ENCODE measurements at regions of chr10 and their contacts with region 1.

Region 1: GRCh38 chr10:79487296-79488194 is 24.8 kb upstream of the EIF5AL1 start:
- DNase-seq: peak; percentile 50
- H3K4me3 ChIP-seq: no peak overlapping the region
- H3K27ac ChIP-seq: no peak overlapping the region
- H3K4me1 ChIP-seq: no peaks in the 10 kb centered on the region
- H3K27me3 ChIP-seq: peaks cover 3 to 6% of the 10 kb centered on the region in 2 experiments
- CTCF ChIP-seq: peak; percentile 60 to 86
- POLR2A ChIP-seq: no peak

Region 2: DNA sequence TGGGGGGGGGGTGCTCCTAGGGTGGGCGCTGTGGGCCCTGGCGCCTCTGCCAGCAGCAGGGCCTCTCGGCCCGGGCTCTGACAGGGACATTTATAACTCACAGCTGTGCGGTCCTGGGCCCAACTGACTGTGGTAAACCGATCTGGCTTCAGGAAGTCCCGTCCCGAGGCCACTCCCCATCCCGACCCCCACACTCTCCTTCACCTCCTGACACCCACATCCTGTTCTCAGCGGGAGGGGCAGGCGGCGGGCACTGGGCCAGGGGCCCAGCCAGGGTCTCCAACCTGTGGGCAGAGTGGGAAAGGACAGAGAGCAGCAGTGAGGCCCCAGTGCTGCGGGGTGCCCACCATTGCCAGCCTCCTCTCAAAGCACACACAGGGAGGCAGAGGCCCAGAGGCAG is 349.7 kb before region 1 on chr10:
- CTCF ChIA-PET with region 1: no interaction called
- POLR2A ChIA-PET with region 1: no interaction called
- dilution Hi-C with region 1: no loop called
- intact Hi-C with region 1: no loop called
- DNase-seq: no peak
- H3K4me3 ChIP-seq: no peak overlapping the region
- H3K27ac ChIP-seq: no peak overlapping the region
- H3K4me1 ChIP-seq: peaks cover 30% of the 10 kb centered on the region
- H3K27me3 ChIP-seq: no peaks in the 10 kb centered on the region
- CTCF ChIP-seq: no peak
- POLR2A ChIP-seq: no peak

Region 3: GRCh38 chr10:79331709-79332108 is 155.8 kb before region 1 on chr10:
- CTCF ChIA-PET with region 1: no interaction called
- POLR2A ChIA-PET with region 1: no interaction called
- dilution Hi-C with region 1: no loop called
- intact Hi-C with region 1: no loop called
- DNase-seq: no peak
- H3K4me3 ChIP-seq: no peak overlapping the region
- H3K27ac ChIP-seq: no peak overlapping the region
- H3K4me1 ChIP-seq: no peaks in the 10 kb centered on the region
- H3K27me3 ChIP-seq: peaks cover 0 to 2% of the 10 kb centered on the region in 2 experiments
- CTCF ChIP-seq: no peak
- POLR2A ChIP-seq: no peak

Region 4: GRCh38 chr10:79463578-79464496 is 23.7 kb before region 1 on chr10:
- CTCF ChIA-PET with region 1: interaction called, 20 read pairs
- POLR2A ChIA-PET with region 1: no interaction called
- dilution Hi-C with region 1: no loop called
- intact Hi-C with region 1: no loop called
- DNase-seq: no peak
- H3K4me3 ChIP-seq: no peak overlapping the region
- H3K27ac ChIP-seq: no peak overlapping the region
- H3K4me1 ChIP-seq: no peaks in the 10 kb centered on the region
- H3K27me3 ChIP-seq: peaks cover 12 to 42% of the 10 kb centered on the region in 2 experiments
- CTCF ChIP-seq: no peak
- POLR2A ChIP-seq: no peak

Region 5: DNA sequence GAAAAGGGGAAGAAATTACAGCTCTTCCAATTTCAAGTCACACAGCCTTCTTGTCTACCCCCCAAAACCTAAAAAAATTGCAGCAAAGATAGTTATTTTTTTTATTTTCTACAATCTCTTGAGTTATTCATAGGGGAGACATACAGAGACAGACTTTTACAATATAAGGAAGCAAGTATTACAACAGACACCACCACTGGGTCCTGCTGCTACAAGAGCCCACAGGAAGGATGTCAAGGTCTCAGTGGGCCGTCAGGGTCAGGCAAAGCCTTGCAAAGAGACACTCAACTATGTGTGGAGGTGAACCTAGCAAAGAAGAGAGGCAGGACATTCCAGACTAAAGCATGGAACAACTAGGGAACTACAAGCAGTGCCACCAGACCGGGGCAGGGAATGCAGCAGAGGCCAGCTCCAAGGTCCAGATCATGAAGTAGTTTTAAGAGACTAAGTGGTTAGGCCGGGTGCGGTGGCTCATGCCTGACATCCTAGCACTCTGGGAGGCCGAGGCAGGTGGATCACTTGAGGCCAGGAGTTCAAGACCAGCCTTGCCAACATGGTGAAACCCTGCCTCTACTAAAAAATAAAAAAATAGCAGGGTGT is 13.9 kb before region 1 on chr10:
- CTCF ChIA-PET with region 1: interaction called, 20 read pairs
- POLR2A ChIA-PET with region 1: no interaction called
- dilution Hi-C with region 1: no loop called
- intact Hi-C with region 1: no loop called
- DNase-seq: no peak
- H3K4me3 ChIP-seq: no peak overlapping the region
- H3K27ac ChIP-seq: no peak overlapping the region
- H3K4me1 ChIP-seq: no peaks in the 10 kb centered on the region
- H3K27me3 ChIP-seq: peaks cover 14 to 15% of the 10 kb centered on the region in 2 experiments
- CTCF ChIP-seq: no peak
- POLR2A ChIP-seq: no peak